ENCODE measurements at regions of chr6 and their contacts with region 1.

Region 1: DNA sequence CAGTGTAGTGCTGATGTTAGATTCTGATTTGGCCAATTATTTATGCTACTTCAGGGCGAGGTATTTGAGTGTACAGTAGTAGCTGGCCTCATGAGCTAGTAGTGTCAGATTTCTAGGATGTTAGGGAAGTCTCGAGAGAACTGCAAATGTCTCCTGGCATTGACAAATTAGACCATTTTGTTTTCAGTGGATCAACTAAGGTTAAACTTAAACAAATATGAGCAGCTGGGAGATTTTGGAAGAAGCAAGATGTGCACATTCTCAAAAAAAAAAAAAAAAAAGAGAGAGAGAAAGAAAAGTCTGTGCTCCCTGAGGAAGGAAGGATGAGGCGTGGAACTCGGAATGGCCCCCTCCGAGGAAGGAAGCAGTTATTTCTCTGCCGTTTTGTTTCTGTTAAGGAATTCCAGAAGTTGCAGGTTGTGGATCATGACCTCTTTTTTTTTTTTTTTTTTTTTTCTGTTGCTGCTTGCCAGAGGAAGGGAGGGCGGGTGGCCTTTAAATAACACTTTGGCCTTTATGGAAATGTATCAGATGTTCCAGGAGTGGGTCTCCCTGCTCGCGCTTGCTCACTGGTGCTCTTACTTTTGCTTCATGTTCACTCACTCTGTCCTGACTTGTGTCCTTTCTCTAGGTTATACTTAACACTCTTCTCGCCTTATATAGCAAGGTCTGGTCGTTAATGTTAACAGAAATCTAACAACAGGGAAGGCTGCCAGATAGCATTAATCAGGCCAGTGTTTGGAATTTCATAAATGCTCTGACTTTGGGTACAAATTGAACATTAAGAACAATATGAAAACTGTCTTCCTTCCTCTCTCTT is 124.4 kb downstream of the TCP11 start:
- DNase-seq: peak in 4 of 5 donors; percentile 68 to 75 (median 71)
- ATAC-seq: peak; percentile 74 to 80 (median 79)
- H3K4me3 ChIP-seq: peak overlapping the region; percentile 29 to 69 (median 58)
- H3K27ac ChIP-seq: peak overlapping the region; percentile 87 to 98 (median 95)
- H3K4me1 ChIP-seq: peaks cover 15 to 85% (median 70%) of the 10 kb centered on the region in 12 donors
- H3K27me3 ChIP-seq: no peaks in the 10 kb centered on the region
- CTCF ChIP-seq: no peak
- POLR2A ChIP-seq: no peak

Region 2: DNA sequence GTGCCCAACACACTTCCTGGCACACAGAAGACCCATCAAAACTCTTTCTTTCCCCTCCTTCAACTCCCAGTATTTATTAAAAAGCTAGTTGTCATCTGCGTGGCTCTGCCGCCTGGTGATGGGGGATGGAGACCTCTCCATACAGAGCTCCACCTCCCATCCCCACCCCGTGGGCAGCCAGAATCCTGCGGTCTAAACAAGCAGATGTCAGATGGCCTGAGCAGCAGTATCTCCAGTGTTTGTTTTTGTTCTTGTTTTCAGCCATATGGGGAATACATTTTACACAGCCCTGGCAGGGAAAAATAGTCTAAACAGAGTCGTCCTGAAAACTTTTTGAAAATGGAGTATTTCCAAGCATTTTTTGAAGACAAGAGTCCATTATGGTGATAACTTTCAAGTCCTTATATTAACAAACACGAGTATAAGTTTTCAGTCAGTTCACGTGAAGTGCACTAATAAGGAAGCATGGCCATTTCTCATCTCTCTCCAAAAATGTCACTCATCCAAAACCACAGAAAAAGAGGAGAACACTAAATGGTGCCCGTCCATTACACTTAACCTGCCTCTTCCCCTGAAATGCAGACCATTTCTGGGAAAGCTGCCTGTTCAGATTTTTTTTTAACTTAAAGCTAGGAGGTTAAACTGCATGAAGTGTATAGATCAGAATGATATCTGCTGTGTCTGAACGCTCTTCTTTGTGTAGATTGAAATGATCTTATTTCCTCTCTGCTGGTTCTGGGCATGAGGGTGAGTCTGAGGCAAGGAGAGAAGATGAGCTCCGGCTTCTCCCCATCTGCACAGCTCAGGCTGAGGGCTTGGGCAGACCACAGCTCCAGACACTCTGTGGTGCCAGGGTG is 33.4 kb after region 1 on chr6:
- intact Hi-C with region 1: loop called in 7 of 10 experiments (anchors 2 to 5 kb)
- DNase-seq: peak; percentile 69 to 86 (median 72)
- ATAC-seq: peak; percentile 24 to 68 (median 37)
- H3K4me3 ChIP-seq: no peak overlapping the region
- H3K27ac ChIP-seq: peak overlapping the region; percentile 66 to 93 (median 83)
- H3K4me1 ChIP-seq: peaks cover 29 to 99% (median 81%) of the 10 kb centered on the region in 12 donors
- H3K27me3 ChIP-seq: no peaks in the 10 kb centered on the region
- CTCF ChIP-seq: no peak
- POLR2A ChIP-seq: no peak

Region 3: DNA sequence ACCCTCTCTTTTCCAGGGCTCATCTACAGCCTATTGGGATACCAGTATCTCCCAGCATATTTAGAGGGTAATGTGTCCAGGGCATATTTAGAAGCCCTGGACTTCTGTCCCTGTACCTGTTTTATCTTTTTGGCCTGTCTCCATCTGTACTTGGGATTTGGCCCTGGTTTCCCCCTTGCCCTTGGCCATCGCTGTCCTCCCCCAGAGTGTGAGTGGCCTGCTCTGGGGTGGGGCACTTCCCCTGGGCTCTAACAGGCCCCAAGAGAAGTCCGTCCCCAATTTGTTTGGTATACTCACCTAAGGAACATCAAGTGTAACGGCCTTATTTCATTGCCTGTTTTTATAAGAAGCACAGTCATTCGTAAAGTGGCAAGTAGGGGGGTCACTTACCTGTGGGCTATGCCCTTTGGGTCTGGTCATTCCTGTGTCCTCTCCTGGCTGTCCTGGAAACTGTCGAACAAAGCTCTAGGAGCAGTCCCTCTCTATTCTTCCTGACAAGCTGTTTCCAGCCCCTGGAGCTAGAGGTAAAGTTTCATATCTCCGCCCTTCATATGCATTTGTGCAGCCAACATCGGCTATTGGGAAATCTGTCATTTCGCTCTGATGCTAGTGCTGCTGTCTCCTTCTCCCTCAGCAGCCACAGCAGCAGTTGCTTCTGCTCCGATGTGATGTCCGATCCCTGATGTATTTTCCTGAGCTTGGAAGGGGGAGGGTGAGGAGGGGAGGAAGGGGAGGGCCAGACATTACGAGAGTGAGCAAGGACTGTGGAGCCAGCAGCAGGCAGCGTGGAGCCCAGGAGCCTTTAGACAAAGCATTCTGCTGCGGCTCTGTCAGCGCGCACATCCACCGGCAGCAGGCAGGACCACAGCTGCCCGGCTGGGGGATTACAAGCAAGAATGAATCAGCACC is 41.0 kb after region 1 on chr6:
- intact Hi-C with region 1: loop called in 7 of 10 experiments (anchors 5 kb)
- DNase-seq: peak in 4 of 5 donors; percentile 45 to 68 (median 52)
- ATAC-seq: peak; percentile 47 to 72 (median 66)
- H3K4me3 ChIP-seq: peak overlapping the region in 3 of 12 donors; percentile 4 to 28 (median 10)
- H3K27ac ChIP-seq: peak overlapping the region; percentile 41 to 82 (median 74)
- H3K4me1 ChIP-seq: peaks cover 0 to 82% (median 43%) of the 10 kb centered on the region in 12 donors
- H3K27me3 ChIP-seq: no peaks in the 10 kb centered on the region
- CTCF ChIP-seq: no peak
- POLR2A ChIP-seq: no peak

Region 4: DNA sequence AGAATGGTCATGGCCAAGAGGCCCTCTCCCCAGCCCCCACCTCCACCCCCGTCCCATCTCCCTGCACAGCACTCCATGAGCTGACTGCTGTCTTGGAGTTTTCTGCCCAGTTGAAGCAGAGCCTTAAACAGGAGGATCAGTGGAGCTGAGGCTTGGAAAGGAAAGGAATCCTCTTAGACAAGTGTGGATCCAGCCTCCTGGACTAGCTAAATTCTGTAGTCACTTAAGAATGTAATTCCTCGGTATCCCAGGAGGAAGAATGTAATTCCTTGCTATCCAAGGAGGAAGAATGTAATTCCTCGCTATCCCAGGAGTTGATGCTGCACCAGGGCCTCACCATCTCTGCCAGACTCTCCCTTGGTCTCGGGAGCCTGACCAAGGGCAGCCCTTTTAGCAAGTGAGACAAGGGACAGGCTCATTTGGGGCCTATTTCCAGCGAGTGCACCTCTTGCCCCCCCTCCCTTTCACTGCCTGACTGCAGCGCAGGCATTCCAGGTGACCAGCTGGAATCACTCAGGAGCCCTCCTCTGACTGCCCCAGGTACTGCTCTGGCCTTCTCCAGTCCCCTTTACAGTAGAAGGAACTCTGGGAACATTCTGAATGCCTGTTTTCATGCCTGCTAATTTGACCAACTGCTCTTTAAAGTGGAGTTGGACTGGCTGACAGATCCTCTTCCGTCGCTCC is 48.2 kb after region 1 on chr6:
- intact Hi-C with region 1: loop called in 1 of 10 experiments (anchors 5 kb)
- DNase-seq: no peak
- ATAC-seq: peak in 3 of 4 donors; percentile 6 to 23 (median 6)
- H3K4me3 ChIP-seq: no peak overlapping the region
- H3K27ac ChIP-seq: peak overlapping the region in 11 of 12 donors; percentile 38 to 84 (median 76)
- H3K4me1 ChIP-seq: peaks cover 0 to 55% (median 24%) of the 10 kb centered on the region in 12 donors
- H3K27me3 ChIP-seq: no peaks in the 10 kb centered on the region
- CTCF ChIP-seq: peak in 1 of 12 donors; percentile 11
- POLR2A ChIP-seq: no peak